ENCODE measurements at regions of chr7 and their contacts with region 1.

Region 1: GRCh38 chr7:31145339-31145738 is 93.2 kb downstream of the ADCYAP1R1 start:
- DNase-seq: no peak
- H3K4me3 ChIP-seq: no peak overlapping the region
- H3K4me3 Mint-ChIP-seq: no peak overlapping the region
- H3K27ac ChIP-seq: no peak overlapping the region
- H3K27ac Mint-ChIP-seq: no peak overlapping the region
- H3K4me1 ChIP-seq: no peaks in the 10 kb centered on the region
- H3K4me1 Mint-ChIP-seq: no peaks in the 10 kb centered on the region
- H3K27me3 ChIP-seq: no peaks in the 10 kb centered on the region
- H3K27me3 Mint-ChIP-seq: peaks cover 8 to 12% of the 10 kb centered on the region in 2 donors

Region 2: DNA sequence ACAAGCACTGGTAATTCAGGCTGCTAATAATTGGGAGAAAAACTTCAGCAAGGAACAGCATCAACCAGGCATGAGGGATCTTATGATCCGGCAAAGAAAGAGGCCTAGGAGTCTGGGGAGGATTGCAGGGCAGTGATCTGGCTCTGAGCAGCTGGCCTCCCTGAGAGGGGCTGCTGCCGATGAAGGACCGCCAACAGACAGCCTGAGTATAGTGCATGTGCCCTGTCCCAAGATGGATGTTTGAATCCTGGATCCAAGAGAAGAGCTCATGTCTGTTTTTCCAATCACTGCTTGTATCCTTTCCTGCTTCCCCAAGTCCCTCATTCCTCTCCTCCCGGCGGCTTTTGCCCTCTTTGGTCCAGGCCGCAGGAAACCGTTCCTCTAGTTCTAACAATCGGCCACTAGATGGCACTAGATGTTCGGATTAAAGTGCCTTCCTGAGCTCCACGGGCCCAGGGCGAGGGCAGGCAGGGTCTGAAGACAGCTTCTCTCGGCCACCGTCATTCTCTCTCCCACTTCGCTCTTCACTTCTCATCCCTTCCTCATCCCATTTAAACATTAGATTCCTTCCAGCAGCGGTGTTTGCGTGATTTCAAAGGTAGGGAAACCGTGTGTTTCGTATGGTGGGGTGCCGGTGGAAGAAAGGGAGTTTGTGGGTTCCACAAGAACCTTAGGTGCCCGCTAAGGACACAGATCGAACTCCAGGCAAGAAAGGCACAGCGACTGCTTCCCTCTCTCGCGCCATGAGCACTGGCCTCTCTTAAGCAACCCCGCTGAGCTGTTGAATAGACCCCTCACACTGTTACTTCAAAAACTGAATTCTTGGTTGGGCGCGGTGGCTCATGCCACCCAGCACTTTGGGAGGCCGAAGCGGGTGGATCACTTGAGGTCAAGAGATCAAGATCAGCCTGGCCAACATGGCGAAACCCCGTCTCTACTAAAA is 10.8 kb before region 1 on chr7:
- CTCF ChIA-PET with region 1: interaction called, 17 read pairs
- POLR2A ChIA-PET with region 1: no interaction called
- intact Hi-C with region 1: no loop called
- DNase-seq: peak in 4 of 5 donors; percentile 18 to 39 (median 31)
- H3K4me3 ChIP-seq: no peak overlapping the region
- H3K4me3 Mint-ChIP-seq: peak overlapping the region in 1 of 8 donors; percentile 37
- H3K27ac ChIP-seq: no peak overlapping the region
- H3K27ac Mint-ChIP-seq: no peak overlapping the region
- H3K4me1 ChIP-seq: no peaks in the 10 kb centered on the region
- H3K4me1 Mint-ChIP-seq: peaks cover 3 to 9% (median 4%) of the 10 kb centered on the region in 4 donors
- H3K27me3 ChIP-seq: no peaks in the 10 kb centered on the region
- H3K27me3 Mint-ChIP-seq: peaks cover 0 to 5% of the 10 kb centered on the region in 2 donors

Region 3: GRCh38 chr7:31382722-31383121 is 237.4 kb after region 1 on chr7:
- CTCF ChIA-PET with region 1: no interaction called
- POLR2A ChIA-PET with region 1: no interaction called
- intact Hi-C with region 1: no loop called
- DNase-seq: no peak
- H3K4me3 ChIP-seq: no peak overlapping the region
- H3K4me3 Mint-ChIP-seq: no peak overlapping the region
- H3K27ac ChIP-seq: no peak overlapping the region
- H3K27ac Mint-ChIP-seq: no peak overlapping the region
- H3K4me1 ChIP-seq: no peaks in the 10 kb centered on the region
- H3K4me1 Mint-ChIP-seq: no peaks in the 10 kb centered on the region
- H3K27me3 ChIP-seq: no peaks in the 10 kb centered on the region
- H3K27me3 Mint-ChIP-seq: no peaks in the 10 kb centered on the region

Measured in CD4-positive, alpha-beta memory T cell (primary cell).